ENCODE measurements at regions of chr14 and their contacts with region 1.

Region 1: DNA sequence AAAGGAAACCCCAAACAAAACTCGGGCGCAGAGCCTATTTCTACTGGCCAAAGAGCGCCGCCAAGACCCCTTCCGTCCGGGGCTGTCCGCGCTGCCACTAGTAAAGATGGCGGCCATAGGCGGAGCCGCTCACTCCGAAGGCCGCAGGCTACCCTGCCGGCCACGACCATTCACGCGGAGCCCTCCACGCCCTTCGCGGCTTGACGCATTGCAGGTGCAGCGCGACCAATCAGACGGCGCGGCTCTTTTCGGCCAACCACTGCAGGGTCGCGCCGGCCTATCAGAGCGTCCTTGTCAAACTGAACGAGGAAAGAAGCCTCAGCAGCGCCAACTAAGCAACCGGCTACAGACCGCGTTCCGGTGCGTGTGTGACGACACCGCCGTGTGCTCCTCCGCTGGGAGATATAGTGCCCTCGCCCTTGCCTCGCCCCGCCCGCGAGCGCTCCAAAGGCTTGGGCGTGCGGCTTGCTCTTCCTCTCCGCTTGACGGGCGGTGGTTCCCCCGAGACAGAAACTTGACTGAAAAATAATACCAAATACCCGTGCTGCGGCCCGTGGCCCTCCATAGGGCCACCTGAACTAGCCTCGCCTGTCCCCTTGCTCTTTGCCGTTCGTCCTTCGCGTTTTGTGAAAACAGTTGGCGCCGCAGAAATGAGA is 13.6 kb upstream of the CALM1 start:
- DNase-seq: peak; percentile 100
- H3K4me3 ChIP-seq: peak overlapping the region; percentile 49 to 63
- H3K27ac ChIP-seq: peak overlapping the region; percentile 99 to 100
- H3K4me1 ChIP-seq: peaks cover 9% of the 10 kb centered on the region
- H3K27me3 ChIP-seq: no peaks in the 10 kb centered on the region
- CTCF ChIP-seq: peak in 2 of 4 experiments; percentile 34 to 39
- POLR2A ChIP-seq: peak; percentile 93

Region 2: DNA sequence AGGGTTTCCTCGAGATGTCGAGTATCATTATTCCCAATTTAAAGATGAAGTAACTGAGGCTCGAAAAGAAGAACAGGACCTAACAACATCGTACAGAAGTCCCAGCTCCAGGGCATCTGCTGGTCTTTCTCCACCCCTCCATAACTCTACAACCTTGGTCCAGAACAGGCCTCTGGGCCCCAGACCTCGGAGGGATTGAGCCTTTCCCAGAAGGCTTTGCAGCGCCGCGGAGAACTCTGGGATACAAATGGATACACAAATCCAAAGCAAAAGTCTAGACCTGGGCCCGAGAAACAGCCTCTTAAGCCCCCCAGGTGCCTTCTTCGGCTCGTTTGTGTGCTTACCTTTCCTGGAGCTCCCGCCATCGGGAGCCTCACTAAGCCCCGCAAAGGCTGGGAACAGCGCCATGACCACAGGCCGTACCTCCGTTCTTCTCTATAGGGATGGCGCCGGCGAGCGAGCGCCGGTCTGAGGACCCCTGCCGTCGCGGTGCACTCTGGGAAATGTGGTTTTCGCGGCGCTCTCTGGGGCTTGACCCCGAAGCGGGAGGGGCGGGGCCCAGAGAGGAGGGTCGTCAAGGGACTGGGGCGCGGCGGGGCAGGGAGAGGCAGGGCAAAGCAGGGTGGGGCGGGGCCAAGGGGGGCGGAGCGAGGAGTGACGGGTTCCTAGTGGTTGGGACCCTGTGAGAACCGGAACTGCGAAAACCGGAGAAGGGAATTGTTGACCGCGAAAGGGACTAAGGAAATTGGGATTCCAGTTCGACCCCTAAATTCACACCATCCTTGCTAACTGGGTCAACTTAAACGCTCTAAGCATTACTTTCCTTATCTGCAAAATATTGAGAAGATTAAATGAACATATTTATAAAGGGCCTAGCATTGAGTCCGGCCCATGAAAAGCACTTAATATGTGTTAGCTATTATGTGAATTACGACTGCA is 51.4 kb before region 1 on chr14 and contains the start of gene NRDE2:
- intact Hi-C with region 1: loop called (anchors 5 kb)
- DNase-seq: peak; percentile 96
- H3K4me3 ChIP-seq: peak within 1 kb of the TSS; percentile 59 to 69
- H3K27ac ChIP-seq: peak within 1 kb of the TSS; percentile 71 to 90
- H3K4me1 ChIP-seq: no peaks in the 10 kb centered on the region
- H3K27me3 ChIP-seq: no peaks in the 10 kb centered on the region
- CTCF ChIP-seq: peak in 2 of 4 experiments; percentile 17
- POLR2A ChIP-seq: no peak
- total RNA-seq, gene NRDE2: 18.8 to 21.5 TPM

Measured in prostate gland (tissue), 2 donors.